Aorta (tissue), 5 donors: ENCODE measurements at regions of chr3 and their contacts with region 1.

Region 1: GRCh38 chr3:4493014-4493940 is at the start of gene ITPR1:
- DNase-seq: peak; percentile 99 to 100
- ATAC-seq: peak; percentile 98
- H3K4me3 ChIP-seq: peak within 1 kb of the TSS; percentile 86 to 92
- H3K27ac ChIP-seq: peak within 1 kb of the TSS; percentile 1 to 73
- H3K4me1 ChIP-seq: no peaks in the 10 kb centered on the region
- H3K27me3 ChIP-seq: no peaks in the 10 kb centered on the region
- total RNA-seq, gene ITPR1: 227 to 294 TPM

Region 2: GRCh38 chr3:4303187-4304123 is 189.8 kb before region 1 on chr3 and contains the start of gene SETMAR:
- intact Hi-C with region 1: no loop called
- DNase-seq: peak; percentile 94 to 95
- ATAC-seq: peak; percentile 94
- H3K4me3 ChIP-seq: peak within 1 kb of the TSS; percentile 46 to 83
- H3K27ac ChIP-seq: peak within 1 kb of the TSS; percentile 77 to 83
- H3K4me1 ChIP-seq: peaks cover 3 to 4% of the 10 kb centered on the region in 2 donors
- H3K27me3 ChIP-seq: no peaks in the 10 kb centered on the region
- total RNA-seq, gene SETMAR: 23.4 to 26.1 TPM

Region 3: DNA sequence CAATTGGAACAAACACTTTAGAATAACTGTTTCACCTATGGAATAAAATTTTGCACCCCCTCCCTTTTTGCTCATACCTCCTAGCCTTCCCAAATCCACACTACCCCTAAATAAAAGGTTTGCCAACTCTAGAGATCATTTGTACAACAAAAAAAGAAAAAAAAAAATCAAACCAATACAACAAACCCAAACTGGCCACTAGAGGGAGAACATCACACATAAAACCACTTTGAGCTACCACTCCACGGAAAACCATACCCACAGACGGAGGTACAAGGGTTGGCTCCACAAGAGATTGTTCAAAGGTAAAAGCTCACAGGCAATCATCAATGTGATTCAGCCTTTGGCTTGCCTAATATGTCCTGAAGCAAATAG is 142.5 kb before region 1 on chr3:
- intact Hi-C with region 1: loop called (anchors 2 to 5 kb)
- DNase-seq: no peak
- ATAC-seq: peak; percentile 94
- H3K4me3 ChIP-seq: peak overlapping the region; percentile 35 to 40
- H3K27ac ChIP-seq: peak overlapping the region in 1 of 2 donors; percentile 67
- H3K4me1 ChIP-seq: no peaks in the 10 kb centered on the region
- H3K27me3 ChIP-seq: no peaks in the 10 kb centered on the region

Region 4: DNA sequence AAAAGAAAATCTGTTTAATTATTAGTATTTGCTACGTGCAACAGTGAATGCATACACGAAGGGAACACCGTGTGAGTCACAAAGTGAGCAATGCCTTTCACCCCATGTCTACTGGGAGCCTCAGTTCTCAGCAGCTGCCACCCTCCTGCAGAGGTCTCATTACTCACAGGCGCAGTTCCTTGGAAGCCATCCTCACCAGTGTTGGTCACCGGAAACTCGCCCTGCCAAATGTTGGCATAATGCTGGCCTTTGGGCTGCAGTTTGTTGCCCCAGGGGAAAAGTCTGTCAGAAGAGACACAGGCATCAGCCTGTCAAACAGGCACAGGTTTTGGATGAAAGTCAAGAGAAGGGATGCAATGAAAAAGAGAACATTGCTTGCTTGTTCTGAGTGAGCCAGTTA is 76.3 kb before region 1 on chr3:
- intact Hi-C with region 1: loop called (anchors 2 to 5 kb)
- DNase-seq: peak; percentile 92
- ATAC-seq: peak; percentile 86
- H3K4me3 ChIP-seq: no peak overlapping the region
- H3K27ac ChIP-seq: peak overlapping the region in 1 of 2 donors; percentile 64
- H3K4me1 ChIP-seq: peaks cover 0 to 6% of the 10 kb centered on the region in 2 donors
- H3K27me3 ChIP-seq: no peaks in the 10 kb centered on the region

Region 5: GRCh38 chr3:4460334-4460733 is 32.9 kb before region 1 on chr3:
- intact Hi-C with region 1: no loop called
- DNase-seq: no peak
- ATAC-seq: no peak
- H3K4me3 ChIP-seq: no peak overlapping the region
- H3K27ac ChIP-seq: no peak overlapping the region
- H3K4me1 ChIP-seq: no peaks in the 10 kb centered on the region
- H3K27me3 ChIP-seq: no peaks in the 10 kb centered on the region

Region 6: DNA sequence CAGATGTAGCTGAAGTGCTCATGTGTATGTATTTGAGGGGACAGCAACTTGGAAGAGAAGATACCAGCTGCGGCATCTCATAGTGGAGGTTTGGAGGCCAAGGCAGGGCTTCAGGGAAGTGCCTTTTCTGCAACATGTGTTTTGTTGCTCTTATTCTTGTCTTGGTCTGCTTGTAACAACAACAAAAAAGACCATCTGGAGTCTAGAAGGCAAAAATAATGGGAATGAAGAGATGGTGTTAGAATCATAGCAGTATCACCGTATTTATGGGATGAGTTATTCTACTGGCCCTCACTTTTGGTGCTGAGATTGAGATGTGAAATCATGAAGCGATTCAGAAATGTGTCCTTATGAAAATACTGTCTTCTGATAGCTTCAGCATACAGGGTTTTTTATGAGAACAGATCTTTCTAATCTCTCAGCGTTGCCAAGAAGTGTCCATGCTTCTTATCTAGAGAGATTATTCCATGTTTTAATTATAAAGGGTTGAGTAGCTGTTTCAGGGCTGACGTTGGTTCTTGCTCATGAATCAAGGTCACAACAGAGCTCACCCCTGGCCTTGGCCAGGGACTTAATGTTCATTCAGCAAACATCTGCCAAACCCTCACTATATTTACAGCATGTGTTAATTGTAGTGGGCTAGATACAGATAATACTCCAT is 57.9 kb after region 1 on chr3:
- intact Hi-C with region 1: loop called in 1 of 2 experiments (anchors 2 kb)
- DNase-seq: no peak
- ATAC-seq: no peak
- H3K4me3 ChIP-seq: no peak overlapping the region
- H3K27ac ChIP-seq: no peak overlapping the region
- H3K4me1 ChIP-seq: peaks cover 2 to 3% of the 10 kb centered on the region in 2 donors
- H3K27me3 ChIP-seq: no peaks in the 10 kb centered on the region

Region 7: DNA sequence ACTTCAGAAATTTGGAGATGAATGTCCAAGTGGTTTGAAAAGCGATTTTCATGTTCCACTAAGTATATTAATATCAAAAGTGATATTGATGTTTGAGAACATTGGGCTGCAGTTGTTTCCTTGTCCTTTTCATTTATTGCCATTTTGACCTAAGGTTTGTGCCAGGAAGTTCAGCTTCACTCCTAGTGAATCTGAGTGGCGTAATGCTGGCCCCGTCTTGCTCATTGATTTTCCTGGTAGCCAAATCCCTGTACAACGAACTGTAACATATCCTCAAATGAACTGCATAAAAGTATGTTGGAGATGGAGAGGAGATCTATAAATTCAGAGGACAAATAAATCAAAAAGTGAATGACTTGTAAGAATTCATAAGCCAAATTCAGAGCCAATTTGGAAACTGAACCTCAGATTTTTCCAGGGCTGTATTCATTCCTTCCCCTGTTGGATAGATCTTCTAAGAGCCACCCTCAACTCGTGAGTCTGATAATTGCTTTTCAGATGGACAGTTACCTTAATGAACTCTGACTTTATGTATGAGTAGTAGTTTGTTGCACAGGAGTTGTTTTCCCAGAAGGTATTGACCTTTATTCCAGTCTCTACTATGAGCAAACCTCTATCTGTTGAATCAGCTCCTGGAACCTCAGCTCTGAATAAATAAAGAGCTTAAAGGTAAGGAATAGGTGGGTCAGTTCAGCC is 72.7 kb after region 1 on chr3:
- intact Hi-C with region 1: loop called in 1 of 2 experiments (anchors 5 kb)
- DNase-seq: no peak
- ATAC-seq: no peak
- H3K4me3 ChIP-seq: no peak overlapping the region
- H3K27ac ChIP-seq: no peak overlapping the region
- H3K4me1 ChIP-seq: peaks cover 0 to 5% of the 10 kb centered on the region in 2 donors
- H3K27me3 ChIP-seq: no peaks in the 10 kb centered on the region

Region 8: DNA sequence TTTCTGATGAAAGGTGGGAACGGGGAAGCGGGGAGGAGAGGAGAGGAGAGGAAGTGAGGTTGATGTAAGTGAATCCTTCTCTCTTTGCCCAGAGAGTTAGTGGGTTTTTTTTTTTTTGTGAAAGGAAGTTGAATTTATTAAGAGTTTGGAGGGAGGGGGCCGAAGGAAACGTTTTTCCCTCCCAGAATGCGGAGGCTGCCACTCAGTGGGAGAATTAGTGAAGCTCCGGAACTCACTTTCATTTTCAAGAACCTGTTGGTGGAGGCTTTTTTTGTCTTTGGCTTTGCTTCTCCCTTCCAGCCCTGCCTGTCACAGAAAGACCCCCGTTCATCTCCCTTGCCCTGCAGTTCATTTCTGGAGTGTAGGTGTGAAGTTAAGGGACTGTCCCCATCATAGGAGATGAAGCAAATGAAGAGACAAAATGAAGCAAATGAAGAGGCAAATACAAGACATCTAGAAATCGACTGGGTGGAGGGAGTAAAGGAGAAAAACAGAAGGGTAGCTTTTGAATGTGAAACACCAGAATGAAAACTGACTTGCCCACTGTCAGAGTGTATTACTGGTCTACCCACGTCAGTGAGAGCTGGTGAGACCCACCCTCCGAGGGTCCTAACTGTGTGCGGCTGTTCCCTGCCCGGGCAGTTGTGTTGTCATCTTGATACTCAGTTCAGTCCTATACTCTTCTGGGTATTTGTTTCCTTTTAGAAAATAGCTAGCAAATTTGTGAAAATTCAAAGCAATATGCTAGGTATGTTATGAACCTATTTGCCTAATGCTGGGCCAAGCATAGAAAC is 91.4 kb after region 1 on chr3:
- intact Hi-C with region 1: loop called (anchors 5 kb)
- DNase-seq: peak in 1 of 2 donors; percentile 54
- ATAC-seq: peak; percentile 67
- H3K4me3 ChIP-seq: peak overlapping the region; percentile 36 to 52
- H3K27ac ChIP-seq: peak overlapping the region; percentile 92 to 98
- H3K4me1 ChIP-seq: peaks cover 5 to 16% of the 10 kb centered on the region in 2 donors
- H3K27me3 ChIP-seq: no peaks in the 10 kb centered on the region

Region 9: GRCh38 chr3:4633078-4634004 is 140.1 kb after region 1 on chr3:
- intact Hi-C with region 1: loop called (anchors 5 to 10 kb)
- DNase-seq: no peak
- ATAC-seq: peak; percentile 87
- H3K4me3 ChIP-seq: no peak overlapping the region
- H3K27ac ChIP-seq: no peak overlapping the region
- H3K4me1 ChIP-seq: peaks cover 0 to 1% of the 10 kb centered on the region in 2 donors
- H3K27me3 ChIP-seq: no peaks in the 10 kb centered on the region